ENCODE measurements at regions of chr1 and their contacts with region 1.

Region 1: GRCh38 chr1:36339215-36339614 is 15.8 kb upstream of the EVA1B start:
- DNase-seq: no peak
- H3K4me3 ChIP-seq: no peak overlapping the region
- CTCF ChIP-seq: no peak
- POLR2A ChIP-seq: no peak

Region 2: GRCh38 chr1:36155408-36156328 is 183.5 kb before region 1 on chr1 and contains the start of gene MAP7D1:
- intact Hi-C with region 1: no loop called
- DNase-seq: peak; percentile 81 to 97
- H3K4me3 ChIP-seq: peak within 1 kb of the TSS; percentile 100
- CTCF ChIP-seq: no peak
- POLR2A ChIP-seq: peak in 1 of 2 donors; percentile 60
- total RNA-seq, gene MAP7D1: 115 to 171 (median 153) TPM

Region 3: GRCh38 chr1:36421665-36422048 is 82.4 kb after region 1 on chr1:
- intact Hi-C with region 1: loop called (anchors 2 kb)
- DNase-seq: no peak
- H3K4me3 ChIP-seq: no peak overlapping the region
- CTCF ChIP-seq: no peak
- POLR2A ChIP-seq: no peak

Region 4: GRCh38 chr1:36771660-36772284 is 432.6 kb after region 1 on chr1:
- intact Hi-C with region 1: loop called (anchors 10 kb)
- DNase-seq: no peak
- H3K4me3 ChIP-seq: no peak overlapping the region
- CTCF ChIP-seq: no peak
- POLR2A ChIP-seq: no peak